ENCODE measurements at regions of chr1 and their contacts with region 1.

Region 1: GRCh38 chr1:19704247-19705113 is 39.8 kb downstream of the HTR6 start:
- DNase-seq: no peak
- H3K4me3 ChIP-seq: no peak overlapping the region
- CTCF ChIP-seq: peak; percentile 96

Region 2: GRCh38 chr1:19668893-19669292 is 35.6 kb before region 1 on chr1:
- CTCF ChIA-PET with region 1: interaction called, 252 read pairs
- POLR2A ChIA-PET with region 1: no interaction called
- DNase-seq: no peak
- H3K4me3 ChIP-seq: no peak overlapping the region
- CTCF ChIP-seq: no peak

Region 3: GRCh38 chr1:19682257-19682656 is 22.2 kb before region 1 on chr1:
- CTCF ChIA-PET with region 1: interaction called, 27 read pairs
- POLR2A ChIA-PET with region 1: no interaction called
- DNase-seq: peak; percentile 67
- H3K4me3 ChIP-seq: no peak overlapping the region
- CTCF ChIP-seq: no peak

Region 4: GRCh38 chr1:19689085-19689757 is 15.3 kb before region 1 on chr1:
- CTCF ChIA-PET with region 1: interaction called, 92 read pairs
- POLR2A ChIA-PET with region 1: no interaction called
- DNase-seq: no peak
- H3K4me3 ChIP-seq: no peak overlapping the region
- CTCF ChIP-seq: no peak

Region 5: DNA sequence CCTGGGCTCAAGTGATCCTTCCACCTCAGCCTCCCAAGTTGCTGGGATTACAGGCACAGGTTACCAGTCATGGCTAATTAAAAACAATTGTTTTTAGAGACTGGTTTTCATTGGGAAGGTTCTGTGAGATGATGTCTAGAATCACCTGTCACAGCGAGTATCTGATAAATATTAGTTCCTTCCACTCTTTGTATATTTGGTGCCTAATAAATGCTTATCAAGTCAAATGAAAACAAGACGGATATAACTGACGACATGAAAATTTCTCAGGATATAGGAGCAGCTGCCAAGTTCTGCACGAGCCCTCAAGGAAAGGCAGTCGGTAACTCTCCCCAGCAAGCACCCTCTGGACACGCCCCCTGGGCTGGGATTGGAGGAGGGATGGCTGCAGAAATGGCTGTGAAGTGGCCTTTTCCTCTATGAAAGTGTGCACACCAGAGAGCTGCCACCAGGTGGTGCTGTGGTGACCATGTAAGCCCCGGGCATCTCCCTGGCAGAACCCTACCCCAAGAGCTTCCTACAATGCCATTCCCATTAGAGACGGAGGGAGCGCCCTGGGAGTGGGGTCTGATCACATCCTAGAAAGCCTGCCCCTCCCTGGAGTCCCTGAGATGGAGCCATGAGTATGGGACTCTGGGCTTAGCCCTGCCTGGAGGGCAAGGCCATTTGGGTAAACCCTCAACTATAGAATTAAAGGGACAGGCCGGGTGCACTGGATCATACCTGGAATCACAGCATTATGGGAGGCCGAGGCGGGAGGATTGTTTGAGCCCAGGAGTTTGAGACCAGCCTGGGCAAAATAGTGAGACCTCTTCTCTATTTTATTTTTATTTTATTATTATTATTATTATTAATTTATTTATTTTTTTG is 11.1 kb after region 1 on chr1:
- CTCF ChIA-PET with region 1: interaction called, 75 read pairs
- POLR2A ChIA-PET with region 1: no interaction called
- DNase-seq: peak; percentile 69
- H3K4me3 ChIP-seq: no peak overlapping the region
- CTCF ChIP-seq: peak; percentile 95

Region 6: DNA sequence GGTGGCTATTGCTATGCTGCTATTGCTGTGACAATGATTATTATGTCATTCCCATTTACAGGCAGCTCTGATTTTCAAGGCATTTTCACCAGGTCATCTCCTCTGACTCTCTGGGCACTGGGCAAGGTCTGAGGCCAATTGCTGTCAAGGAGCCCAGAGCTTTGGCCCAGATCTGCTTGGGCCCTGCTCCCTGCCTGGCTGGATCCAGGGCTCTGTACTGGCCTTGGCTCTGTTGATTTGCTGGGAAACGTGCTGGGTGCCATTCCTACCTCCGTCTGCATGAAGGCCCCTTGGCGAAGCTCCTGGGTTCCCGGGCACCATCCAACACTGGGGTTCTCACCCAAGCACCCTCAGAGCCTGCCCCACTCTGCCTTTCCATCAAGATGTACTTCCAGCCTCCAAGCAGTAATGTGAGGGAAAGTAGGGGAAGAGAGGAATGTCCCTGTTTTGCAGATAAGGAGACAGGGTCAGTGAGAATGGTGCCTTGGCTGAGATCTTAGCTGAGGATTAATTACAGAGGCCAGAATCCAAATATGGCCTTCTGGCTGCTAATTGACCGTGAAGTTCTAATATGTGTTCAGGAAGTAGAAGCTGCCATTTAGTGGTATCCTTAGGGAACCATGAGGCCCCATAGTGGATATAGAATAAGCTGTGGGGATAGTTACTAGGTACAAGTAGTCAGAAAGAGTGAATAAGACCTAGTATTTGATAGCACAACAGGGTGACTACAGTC is 24.1 kb after region 1 on chr1:
- CTCF ChIA-PET with region 1: interaction called, 14 read pairs
- POLR2A ChIA-PET with region 1: no interaction called
- DNase-seq: no peak
- H3K4me3 ChIP-seq: no peak overlapping the region
- CTCF ChIP-seq: no peak

Region 7: GRCh38 chr1:19811206-19811851 is 106.8 kb after region 1 on chr1:
- CTCF ChIA-PET with region 1: interaction called, 15 read pairs
- POLR2A ChIA-PET with region 1: no interaction called
- DNase-seq: no peak
- H3K4me3 ChIP-seq: no peak overlapping the region
- CTCF ChIP-seq: peak; percentile 67